ENCODE measurements at regions of chr20 and their contacts with region 1.

Region 1: DNA sequence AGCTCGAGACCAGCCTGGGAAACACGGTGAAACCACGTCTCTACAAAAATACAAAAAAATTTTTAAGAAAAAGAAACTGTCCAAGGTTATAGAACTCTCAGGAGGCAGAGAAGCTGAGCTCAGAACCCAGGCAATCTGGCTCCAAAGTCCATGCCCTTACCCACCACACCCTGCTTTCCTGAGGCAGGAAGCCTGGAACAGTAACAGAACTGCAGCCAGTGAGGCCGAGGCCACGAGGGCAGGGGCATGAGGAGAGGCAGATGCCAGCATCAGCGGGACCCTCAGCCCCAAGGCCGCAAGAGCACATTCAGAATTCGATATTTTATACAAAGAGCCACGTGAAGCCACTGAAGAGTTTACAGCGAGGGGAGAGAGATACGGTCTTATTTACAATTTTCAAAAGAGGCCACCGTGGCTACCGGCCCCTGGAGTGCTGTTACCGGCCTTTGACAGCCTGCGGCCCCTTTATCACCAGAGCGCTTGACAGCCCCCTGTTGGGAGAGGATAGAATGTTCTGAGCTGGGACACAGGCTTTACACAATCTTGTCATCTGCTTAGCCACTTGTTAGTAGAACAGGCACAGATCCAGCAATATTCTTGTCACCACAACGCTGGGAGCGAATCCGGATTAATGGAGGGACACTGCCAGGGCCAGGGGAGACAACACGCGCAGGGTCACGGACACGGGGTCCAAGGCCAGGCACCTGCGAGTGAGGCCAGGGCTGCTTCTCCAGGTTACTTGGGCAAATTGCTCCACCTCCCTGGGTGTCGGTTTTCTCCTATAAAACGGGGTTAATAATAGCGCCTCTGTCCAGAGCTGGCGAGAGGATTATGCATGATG is 5.6 kb downstream of the SPATA2 start:
- DNase-seq: peak; percentile 52
- ATAC-seq: peak; percentile 64
- H3K4me3 ChIP-seq: no peak overlapping the region
- H3K27ac ChIP-seq: peak overlapping the region; percentile 28
- H3K4me1 ChIP-seq: peaks cover 57% of the 10 kb centered on the region
- H3K27me3 ChIP-seq: no peaks in the 10 kb centered on the region; a peak in 1 of 5 replicates
- CTCF ChIP-seq: peak; percentile 54
- EP300 ChIP-seq: no peak
- POLR2A ChIP-seq: 0 out of 4 replicates have a peak, but pooled peaks of 1 of the 2 experiments have one; percentile 14
- RAD21 ChIP-seq: peak; percentile 53; the same call in 1 of the 2 replicates

Region 2: GRCh38 chr20:49838546-49838945 is 71.2 kb before region 1 on chr20:
- CTCF ChIA-PET with region 1: no interaction called
- POLR2A ChIA-PET with region 1: no interaction called
- in situ Hi-C with region 1: no loop called
- intact Hi-C with region 1: no loop called
- DNase-seq: no peak
- ATAC-seq: no peak
- H3K4me3 ChIP-seq: no peak overlapping the region
- H3K27ac ChIP-seq: no peak overlapping the region
- H3K4me1 ChIP-seq: no peaks in the 10 kb centered on the region
- H3K27me3 ChIP-seq: no peaks in the 10 kb centered on the region
- CTCF ChIP-seq: no peak
- EP300 ChIP-seq: no peak
- POLR2A ChIP-seq: no peak
- RAD21 ChIP-seq: no peak

Region 3: DNA sequence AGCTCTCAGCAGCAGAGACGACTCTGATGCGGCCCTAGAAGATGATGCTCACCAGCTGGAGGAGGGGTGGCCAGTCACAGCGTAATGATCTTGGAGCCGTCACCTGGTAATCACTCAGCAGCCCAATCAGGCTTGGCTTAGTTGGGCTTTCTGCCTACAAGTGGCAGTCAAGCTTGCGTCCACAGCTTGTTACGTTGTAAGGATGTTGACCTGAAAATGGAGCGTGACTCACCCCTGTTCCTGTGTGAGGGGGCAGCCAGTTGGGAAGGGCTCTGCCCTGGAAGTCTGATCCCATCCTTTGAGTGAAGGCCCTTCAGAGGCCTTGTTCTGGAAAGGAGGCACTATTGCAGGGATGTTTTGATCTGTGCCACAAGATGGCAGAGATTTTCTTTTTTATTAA is 44.2 kb before region 1 on chr20:
- CTCF ChIA-PET with region 1: no interaction called
- POLR2A ChIA-PET with region 1: no interaction called
- in situ Hi-C with region 1: no loop called
- intact Hi-C with region 1: no loop called
- DNase-seq: no peak
- ATAC-seq: no peak
- H3K4me3 ChIP-seq: no peak overlapping the region
- H3K27ac ChIP-seq: no peak overlapping the region
- H3K4me1 ChIP-seq: no peaks in the 10 kb centered on the region
- H3K27me3 ChIP-seq: no peaks in the 10 kb centered on the region
- CTCF ChIP-seq: no peak
- EP300 ChIP-seq: no peak
- POLR2A ChIP-seq: no peak
- RAD21 ChIP-seq: no peak

Region 4: DNA sequence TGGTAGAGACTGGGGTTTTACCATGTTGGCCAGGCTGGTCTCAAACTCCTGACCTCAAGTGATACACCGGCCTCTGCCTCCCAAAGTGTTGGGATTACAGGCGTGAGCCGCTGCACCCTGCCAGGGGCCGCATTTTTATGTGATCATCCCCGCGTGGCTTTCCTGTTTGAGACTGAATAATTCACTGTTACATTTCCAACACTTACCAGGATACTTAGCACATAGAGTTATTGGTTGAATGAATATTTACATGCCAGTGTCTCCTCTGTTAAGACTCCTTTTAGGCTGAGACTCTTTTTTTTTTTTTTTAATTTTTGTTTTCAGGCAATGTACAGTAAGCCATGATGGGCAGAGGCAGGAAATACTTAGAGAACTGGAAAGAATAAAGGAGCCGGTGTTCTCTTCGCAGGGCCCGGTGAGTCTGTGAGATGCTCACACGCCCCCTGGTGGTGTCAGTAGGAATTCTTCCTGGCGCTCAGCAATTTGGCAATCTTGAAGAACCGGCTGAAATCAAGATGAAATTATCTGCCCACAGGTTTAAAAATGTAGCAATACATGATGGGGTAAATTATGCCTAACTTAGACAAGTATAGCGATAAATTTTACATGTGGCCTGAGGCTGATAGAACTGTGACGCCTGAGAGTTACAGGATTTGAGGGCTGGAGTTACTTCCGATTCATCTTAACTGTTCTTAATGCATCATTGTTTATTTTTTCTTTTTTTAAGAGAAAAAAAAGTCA is 18.9 kb after region 1 on chr20:
- CTCF ChIA-PET with region 1: interaction called, 11 read pairs
- POLR2A ChIA-PET with region 1: no interaction called
- in situ Hi-C with region 1: no loop called
- intact Hi-C with region 1: loop called (anchors 2 kb)
- DNase-seq: peak; percentile 86
- ATAC-seq: peak; percentile 89
- H3K4me3 ChIP-seq: peak overlapping the region in 1 of 3 experiments; percentile 36; a peak in 2 of 6 replicates
- H3K27ac ChIP-seq: no peak overlapping the region
- H3K4me1 ChIP-seq: peaks cover 44% of the 10 kb centered on the region
- H3K27me3 ChIP-seq: no peaks in the 10 kb centered on the region
- CTCF ChIP-seq: peak; percentile 92
- EP300 ChIP-seq: peak in 1 of 2 experiments; percentile 56; a peak in 1 of 4 replicates
- POLR2A ChIP-seq: no peak
- RAD21 ChIP-seq: peak; percentile 94